PC-3 (cell line): ENCODE measurements at regions of chr1 and their contacts with region 1.

Region 1: GRCh38 chr1:162023547-162024501 is at the start of gene OLFML2B:
- DNase-seq: peak; percentile 89
- ATAC-seq: peak; percentile 85
- H3K4me3 ChIP-seq: peak within 1 kb of the TSS; percentile 85
- H3K27ac ChIP-seq: no peak within 1 kb of the TSS
- H3K4me1 ChIP-seq: peaks cover 30% of the 10 kb centered on the region
- H3K27me3 ChIP-seq: no peaks in the 10 kb centered on the region
- CTCF ChIP-seq: peak; percentile 64
- total RNA-seq, gene OLFML2B: 0.46 and 1.4 TPM in 2 replicates

Region 2: GRCh38 chr1:161864577-161864976 is 159.2 kb before region 1 on chr1:
- CTCF ChIA-PET with region 1: interaction called, 6 read pairs
- POLR2A ChIA-PET with region 1: no interaction called
- intact Hi-C with region 1: loop called (anchors 1 kb)
- DNase-seq: peak; percentile 32
- ATAC-seq: peak; percentile 79
- H3K4me3 ChIP-seq: no peak overlapping the region
- H3K27ac ChIP-seq: no peak overlapping the region
- H3K4me1 ChIP-seq: no peaks in the 10 kb centered on the region
- H3K27me3 ChIP-seq: no peaks in the 10 kb centered on the region
- CTCF ChIP-seq: peak; percentile 63

Region 3: GRCh38 chr1:161885003-161885402 is 138.8 kb before region 1 on chr1:
- CTCF ChIA-PET with region 1: no interaction called
- POLR2A ChIA-PET with region 1: no interaction called
- intact Hi-C with region 1: loop called (anchors 5 kb)
- DNase-seq: peak; percentile 75
- ATAC-seq: peak; percentile 85
- H3K4me3 ChIP-seq: peak overlapping the region; percentile 42
- H3K27ac ChIP-seq: peak overlapping the region; percentile 21
- H3K4me1 ChIP-seq: peaks cover 23% of the 10 kb centered on the region
- H3K27me3 ChIP-seq: no peaks in the 10 kb centered on the region
- CTCF ChIP-seq: no peak

Region 4: DNA sequence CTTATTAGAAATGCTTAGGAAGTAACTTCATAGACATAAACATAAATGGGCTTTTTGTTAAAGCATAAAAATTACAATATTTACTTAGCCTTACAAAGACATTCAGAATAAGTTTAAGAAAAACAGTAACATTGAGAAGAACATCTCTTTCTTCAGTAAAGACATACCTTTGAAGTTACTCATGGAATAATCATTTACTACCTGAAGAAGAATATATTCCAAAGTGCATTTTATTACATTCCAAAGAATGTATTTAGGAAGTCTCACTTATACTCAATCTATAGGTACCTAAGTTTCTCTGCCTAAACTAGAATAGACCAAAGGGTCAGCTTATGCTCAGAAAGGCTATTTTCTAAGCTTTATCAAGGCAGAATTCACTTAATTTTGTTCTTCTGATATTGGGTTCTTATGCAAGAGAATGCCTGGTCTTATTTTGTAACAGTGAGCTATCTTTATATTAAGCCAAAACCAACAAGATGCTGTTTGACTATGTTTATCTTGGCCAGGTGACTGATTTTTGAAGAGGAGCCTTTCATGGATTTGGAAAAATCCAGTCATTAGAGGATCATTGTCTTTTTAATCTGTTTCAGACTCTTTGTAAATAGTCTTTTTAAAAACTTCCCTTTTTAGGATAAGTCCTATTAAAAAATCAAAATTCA is 110.2 kb before region 1 on chr1:
- CTCF ChIA-PET with region 1: no interaction called
- POLR2A ChIA-PET with region 1: no interaction called
- intact Hi-C with region 1: loop called (anchors 5 kb)
- DNase-seq: peak; percentile 75
- ATAC-seq: peak; percentile 86
- H3K4me3 ChIP-seq: no peak overlapping the region; the same call in 1 of the 2 replicates
- H3K27ac ChIP-seq: peak overlapping the region; percentile 25
- H3K4me1 ChIP-seq: peaks cover 33% of the 10 kb centered on the region
- H3K27me3 ChIP-seq: no peaks in the 10 kb centered on the region
- CTCF ChIP-seq: no peak

Region 5: GRCh38 chr1:161962091-161962887 is 61.5 kb before region 1 on chr1:
- CTCF ChIA-PET with region 1: interaction called, 3 read pairs
- POLR2A ChIA-PET with region 1: no interaction called
- intact Hi-C with region 1: loop called (anchors 1 kb)
- DNase-seq: peak; percentile 81
- ATAC-seq: peak; percentile 86
- H3K4me3 ChIP-seq: peak overlapping the region; percentile 65
- H3K27ac ChIP-seq: peak overlapping the region; percentile 81
- H3K4me1 ChIP-seq: peaks cover 27% of the 10 kb centered on the region
- H3K27me3 ChIP-seq: no peaks in the 10 kb centered on the region
- CTCF ChIP-seq: 0 out of 2 replicates have a peak, but pooled peaks have one; percentile 16

Region 6: GRCh38 chr1:161997152-161997551 is 26.7 kb before region 1 on chr1:
- CTCF ChIA-PET with region 1: no interaction called
- POLR2A ChIA-PET with region 1: no interaction called
- intact Hi-C with region 1: no loop called
- DNase-seq: no peak
- ATAC-seq: no peak
- H3K4me3 ChIP-seq: no peak overlapping the region
- H3K27ac ChIP-seq: no peak overlapping the region
- H3K4me1 ChIP-seq: peaks cover 8% of the 10 kb centered on the region; the same call in 1 of the 2 replicates
- H3K27me3 ChIP-seq: no peaks in the 10 kb centered on the region
- CTCF ChIP-seq: no peak

Region 7: DNA sequence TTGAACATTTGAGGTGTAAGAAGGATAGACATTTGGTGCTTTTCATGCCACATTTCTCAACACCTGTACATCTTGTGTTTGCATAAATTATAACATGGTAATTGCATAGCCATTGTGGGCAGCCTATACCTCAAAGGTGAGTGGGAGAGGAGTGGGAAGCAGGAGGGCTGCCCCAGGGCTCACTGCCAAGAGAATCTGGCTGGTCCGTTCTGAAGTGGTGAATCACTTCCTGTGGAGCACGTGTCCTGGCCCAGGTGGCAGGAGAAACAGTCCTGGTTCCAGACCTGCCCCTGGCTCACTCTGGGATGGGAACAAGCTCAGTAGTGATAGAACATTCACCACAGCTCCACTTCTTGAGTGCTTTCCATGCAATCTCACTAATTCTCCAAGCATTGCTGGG is 11.4 kb after region 1 on chr1:
- CTCF ChIA-PET with region 1: interaction called, 11 read pairs
- POLR2A ChIA-PET with region 1: interaction called, 3 read pairs
- intact Hi-C with region 1: no loop called
- DNase-seq: peak; percentile 72
- ATAC-seq: peak; percentile 29
- H3K4me3 ChIP-seq: no peak overlapping the region
- H3K27ac ChIP-seq: no peak overlapping the region
- H3K4me1 ChIP-seq: peaks cover 24% of the 10 kb centered on the region
- H3K27me3 ChIP-seq: no peaks in the 10 kb centered on the region
- CTCF ChIP-seq: no peak

Region 8: DNA sequence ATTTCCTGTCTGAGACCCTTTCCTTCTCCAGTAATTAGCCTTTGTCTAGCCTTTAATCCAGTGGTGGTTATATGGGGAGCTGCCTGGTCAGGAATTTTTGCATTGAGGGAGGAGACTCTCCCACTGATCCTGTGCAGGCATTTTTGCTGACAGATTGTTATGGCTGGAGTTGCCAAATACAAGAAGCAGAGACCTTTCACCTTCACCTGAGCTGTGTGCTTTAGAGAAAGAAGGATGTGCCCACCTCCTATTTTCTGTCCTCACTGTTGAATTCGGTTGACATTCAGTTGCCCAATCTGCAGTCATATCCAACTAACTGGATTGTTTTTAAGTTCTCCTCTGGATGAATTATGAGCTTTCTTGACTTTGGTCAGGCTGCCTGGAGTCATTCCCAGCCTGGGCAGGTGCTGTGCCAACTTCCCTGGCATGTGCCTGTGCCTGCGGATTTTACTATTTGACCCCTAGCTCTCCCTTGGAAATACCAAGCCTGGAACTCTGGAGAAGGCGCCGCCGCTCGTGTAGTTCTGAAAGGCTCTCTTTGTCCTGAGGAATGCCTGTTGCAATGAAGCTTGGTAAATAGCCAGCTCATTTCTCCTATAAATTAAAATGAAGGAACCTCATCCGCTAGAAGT is 189.6 kb after region 1 on chr1:
- CTCF ChIA-PET with region 1: no interaction called
- POLR2A ChIA-PET with region 1: no interaction called
- intact Hi-C with region 1: no loop called
- DNase-seq: peak; percentile 94
- ATAC-seq: peak; percentile 87
- H3K4me3 ChIP-seq: no peak overlapping the region
- H3K27ac ChIP-seq: no peak overlapping the region
- H3K4me1 ChIP-seq: peaks cover 19% of the 10 kb centered on the region
- H3K27me3 ChIP-seq: no peaks in the 10 kb centered on the region
- CTCF ChIP-seq: no peak

Region 9: DNA sequence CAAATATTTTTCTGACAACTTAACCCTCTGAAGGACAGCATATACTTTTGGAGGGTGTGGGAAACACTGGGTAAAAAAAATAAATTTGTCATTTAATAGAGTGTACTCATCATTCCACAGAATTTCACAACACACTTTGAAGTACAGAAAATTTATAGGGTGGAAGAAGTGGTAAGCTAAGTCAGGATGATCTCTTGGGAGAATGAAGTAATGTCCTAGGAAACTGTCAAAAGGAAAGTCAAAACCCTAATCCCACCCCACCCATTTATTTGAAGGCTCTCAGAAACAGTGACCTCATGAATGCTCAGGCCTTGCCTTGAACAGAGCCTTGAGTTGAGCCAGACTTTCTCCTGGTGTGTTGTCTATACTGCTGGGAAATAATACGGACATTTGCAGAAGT is 530.4 kb after region 1 on chr1:
- CTCF ChIA-PET with region 1: no interaction called
- POLR2A ChIA-PET with region 1: no interaction called
- intact Hi-C with region 1: no loop called
- DNase-seq: no peak
- ATAC-seq: no peak
- H3K4me3 ChIP-seq: no peak overlapping the region
- H3K27ac ChIP-seq: no peak overlapping the region
- H3K4me1 ChIP-seq: peaks cover 18% of the 10 kb centered on the region
- H3K27me3 ChIP-seq: no peaks in the 10 kb centered on the region
- CTCF ChIP-seq: no peak